ENCODE measurements at regions of chr15 and their contacts with region 1.

Region 1: DNA sequence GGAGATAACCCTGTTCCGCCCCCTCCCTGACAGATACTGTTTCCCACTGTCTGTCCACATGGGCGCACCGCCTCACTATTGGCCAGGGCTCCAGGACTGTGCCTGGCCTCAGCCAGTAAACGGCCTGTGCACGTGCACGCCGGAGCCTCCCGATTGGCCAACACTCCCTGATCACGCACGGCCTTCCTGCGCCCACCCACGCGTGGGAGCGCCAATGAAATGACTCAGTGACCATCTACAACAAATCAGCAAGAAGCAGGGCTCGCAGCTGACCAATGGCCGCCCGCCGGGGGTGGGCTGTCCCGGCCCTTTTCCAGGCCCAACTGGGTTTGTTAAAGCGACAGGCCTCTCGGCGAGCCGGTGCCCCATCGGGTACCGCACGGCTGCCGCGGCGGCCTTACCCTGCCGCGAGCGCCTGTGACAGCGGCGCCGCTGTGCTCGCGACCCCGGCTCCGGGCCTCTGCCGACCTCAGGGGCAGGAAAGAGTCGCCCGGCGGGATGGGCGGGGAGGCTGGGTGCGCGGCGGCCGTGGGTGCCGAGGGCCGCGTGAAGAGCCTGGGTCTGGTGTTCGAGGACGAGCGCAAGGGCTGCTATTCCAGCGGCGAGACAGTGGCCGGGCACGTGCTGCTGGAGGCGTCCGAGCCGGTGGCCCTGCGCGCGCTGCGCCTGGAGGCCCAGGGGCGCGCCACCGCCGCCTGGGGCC is at the start of gene ARRDC4:
- DNase-seq: peak; percentile 92 to 99 (median 94)
- ATAC-seq: peak; percentile 97
- H3K4me3 ChIP-seq: peak within 1 kb of the TSS; percentile 70
- H3K27ac ChIP-seq: peak within 1 kb of the TSS; percentile 92
- H3K4me1 ChIP-seq: peaks cover 13 to 15% of the 10 kb centered on the region in 2 experiments; a peak in 4 of 5 replicates
- H3K27me3 ChIP-seq: no peaks in the 10 kb centered on the region
- CTCF ChIP-seq: no peak
- EP300 ChIP-seq: peak; percentile 74
- POLR2A ChIP-seq: peak; percentile 52
- RAD21 ChIP-seq: no peak
- polyA plus RNA-seq, gene ARRDC4: 4.3 to 4.8 TPM

Region 2: DNA sequence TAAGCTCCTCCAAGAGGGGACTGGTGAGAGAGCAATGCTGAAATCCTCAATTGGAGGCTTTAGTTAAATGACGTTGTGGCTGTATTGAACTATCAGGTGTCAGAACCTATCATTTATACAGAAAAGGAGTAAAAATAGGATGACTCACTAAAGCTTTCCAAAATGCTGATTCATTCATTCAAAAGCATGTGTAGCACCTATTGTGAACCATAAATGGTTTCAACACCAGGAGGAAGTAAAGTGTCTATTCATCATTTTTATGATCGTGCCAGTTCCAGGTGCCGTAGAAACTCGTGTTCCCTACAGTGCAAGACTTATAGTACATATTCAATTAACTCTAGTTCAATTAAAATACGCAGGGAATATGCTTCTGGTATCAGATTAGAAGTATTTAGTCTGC is 66.5 kb before region 1 on chr15:
- CTCF ChIA-PET with region 1: no interaction called
- POLR2A ChIA-PET with region 1: no interaction called
- in situ Hi-C with region 1: no loop called
- intact Hi-C with region 1: no loop called
- DNase-seq: no peak
- ATAC-seq: no peak; the same call in 2 of the 3 replicates
- H3K4me3 ChIP-seq: no peak overlapping the region
- H3K27ac ChIP-seq: no peak overlapping the region
- H3K4me1 ChIP-seq: no peaks in the 10 kb centered on the region
- H3K27me3 ChIP-seq: peaks cover 0 to 11% of the 10 kb centered on the region in 2 experiments; a peak in 3 of 5 replicates
- CTCF ChIP-seq: no peak
- EP300 ChIP-seq: no peak
- POLR2A ChIP-seq: no peak
- RAD21 ChIP-seq: no peak

Region 3: DNA sequence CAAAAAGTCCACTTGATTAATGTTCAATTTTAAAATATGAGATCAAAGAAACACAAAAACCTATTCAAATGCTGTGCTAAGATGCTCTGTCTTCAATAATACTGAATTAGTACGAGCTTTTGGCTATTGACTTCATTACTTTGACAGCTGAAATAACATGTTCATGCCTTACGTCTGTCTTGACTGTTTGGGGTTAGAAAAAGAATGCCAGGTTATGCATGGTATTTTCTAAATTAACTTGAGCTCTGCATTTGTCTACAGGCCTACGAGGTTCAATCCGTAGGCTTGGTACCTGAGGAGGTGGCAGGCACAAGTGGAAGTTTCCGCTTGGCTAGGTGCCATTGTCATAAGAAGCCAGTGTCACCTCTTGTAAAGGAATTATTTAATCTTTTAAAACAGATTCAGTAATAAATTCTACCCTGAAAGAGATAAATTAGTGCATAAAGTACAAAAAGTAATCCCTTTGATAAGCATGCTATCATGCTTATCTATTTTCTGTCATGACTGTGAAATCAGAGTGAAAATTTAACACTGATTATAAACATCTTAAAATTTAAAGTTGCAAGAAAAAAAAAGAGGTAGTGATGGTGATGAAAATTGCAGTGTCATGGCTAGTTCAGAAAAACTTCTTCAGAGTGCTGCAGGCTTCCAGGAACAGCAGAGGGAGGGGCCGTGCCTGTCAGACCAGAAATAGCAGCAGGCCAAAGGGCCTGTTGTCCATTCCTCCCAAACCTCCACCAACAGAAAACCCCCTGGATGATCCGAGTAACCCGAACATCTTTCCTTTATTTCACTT is 115.7 kb after region 1 on chr15:
- CTCF ChIA-PET with region 1: no interaction called
- POLR2A ChIA-PET with region 1: no interaction called
- in situ Hi-C with region 1: no loop called
- intact Hi-C with region 1: loop called (anchors 5 kb)
- DNase-seq: peak; percentile 46 to 87 (median 66)
- ATAC-seq: peak; percentile 98
- H3K4me3 ChIP-seq: peak overlapping the region; percentile 7; the same call in 1 of the 2 replicates
- H3K27ac ChIP-seq: peak overlapping the region; percentile 76
- H3K4me1 ChIP-seq: peaks cover 7 to 24% of the 10 kb centered on the region in 2 experiments; a peak in 4 of 5 replicates
- H3K27me3 ChIP-seq: no peaks in the 10 kb centered on the region
- CTCF ChIP-seq: no peak
- EP300 ChIP-seq: peak; percentile 62; the same call in 1 of the 2 replicates
- POLR2A ChIP-seq: no peak
- RAD21 ChIP-seq: no peak

Region 4: GRCh38 chr15:98174286-98174685 is 213.8 kb after region 1 on chr15:
- CTCF ChIA-PET with region 1: no interaction called
- POLR2A ChIA-PET with region 1: no interaction called
- in situ Hi-C with region 1: no loop called
- intact Hi-C with region 1: no loop called
- DNase-seq: peak in 1 of 4 experiments; percentile 4
- ATAC-seq: no peak
- H3K4me3 ChIP-seq: no peak overlapping the region
- H3K27ac ChIP-seq: no peak overlapping the region
- H3K4me1 ChIP-seq: no peaks in the 10 kb centered on the region
- H3K27me3 ChIP-seq: no peaks in the 10 kb centered on the region
- CTCF ChIP-seq: no peak
- EP300 ChIP-seq: no peak
- POLR2A ChIP-seq: no peak
- RAD21 ChIP-seq: peak in 1 of 2 experiments; percentile 35; a peak in 2 of 4 replicates

Measured in K562 (cell line).